ENCODE measurements at regions of chr14 and their contacts with region 1.

Region 1: GRCh38 chr14:76962303-76962660 is 66.2 kb downstream of the IRF2BPL start:
- DNase-seq: no peak
- ATAC-seq: no peak
- H3K4me3 Mint-ChIP-seq: peak overlapping the region; percentile 59
- H3K27ac Mint-ChIP-seq: peak overlapping the region; percentile 100
- H3K4me1 Mint-ChIP-seq: peaks cover 87% of the 10 kb centered on the region
- H3K27me3 Mint-ChIP-seq: no peaks in the 10 kb centered on the region
- CTCF ChIP-seq: no peak

Region 2: DNA sequence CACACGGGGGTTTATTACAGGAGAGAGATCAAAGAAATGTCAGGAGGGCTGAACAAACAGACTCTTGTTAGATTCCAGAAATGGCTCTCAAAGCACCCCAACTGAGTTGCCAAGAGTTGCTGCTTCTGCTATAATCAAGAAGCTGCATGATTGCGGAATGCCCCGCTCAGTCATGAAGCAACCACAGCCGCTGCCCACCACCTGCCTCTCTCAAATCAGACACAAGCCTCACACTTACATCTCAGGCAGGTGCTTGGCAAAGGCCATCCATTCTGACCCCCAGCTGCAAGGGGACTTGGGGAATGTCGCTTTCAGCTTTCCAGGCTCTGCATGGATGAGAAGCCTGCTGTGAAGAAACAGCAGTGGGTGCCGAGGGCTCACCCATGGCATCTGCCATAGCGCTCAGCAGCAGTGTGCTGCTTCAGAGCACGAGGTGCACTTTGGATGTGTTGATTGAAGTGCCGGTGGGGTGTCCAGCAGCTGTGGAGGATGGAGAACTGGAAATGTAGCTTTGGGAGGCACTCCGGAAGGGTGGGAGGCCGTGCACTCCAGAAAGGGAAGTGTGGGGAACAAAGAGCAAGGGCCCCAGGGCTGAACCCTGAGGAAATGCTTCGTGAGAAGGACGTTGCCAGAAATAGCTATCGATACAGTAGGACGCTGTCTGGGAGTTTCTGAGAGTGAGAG is 98.4 kb before region 1 on chr14:
- CTCF ChIA-PET with region 1: no interaction called
- POLR2A ChIA-PET with region 1: no interaction called
- DNase-seq: no peak
- ATAC-seq: peak; percentile 16
- H3K4me3 Mint-ChIP-seq: no peak overlapping the region
- H3K27ac Mint-ChIP-seq: no peak overlapping the region
- H3K4me1 Mint-ChIP-seq: peaks cover 41% of the 10 kb centered on the region
- H3K27me3 Mint-ChIP-seq: no peaks in the 10 kb centered on the region; the same call in none of the 2 replicates
- CTCF ChIP-seq: no peak

Region 3: DNA sequence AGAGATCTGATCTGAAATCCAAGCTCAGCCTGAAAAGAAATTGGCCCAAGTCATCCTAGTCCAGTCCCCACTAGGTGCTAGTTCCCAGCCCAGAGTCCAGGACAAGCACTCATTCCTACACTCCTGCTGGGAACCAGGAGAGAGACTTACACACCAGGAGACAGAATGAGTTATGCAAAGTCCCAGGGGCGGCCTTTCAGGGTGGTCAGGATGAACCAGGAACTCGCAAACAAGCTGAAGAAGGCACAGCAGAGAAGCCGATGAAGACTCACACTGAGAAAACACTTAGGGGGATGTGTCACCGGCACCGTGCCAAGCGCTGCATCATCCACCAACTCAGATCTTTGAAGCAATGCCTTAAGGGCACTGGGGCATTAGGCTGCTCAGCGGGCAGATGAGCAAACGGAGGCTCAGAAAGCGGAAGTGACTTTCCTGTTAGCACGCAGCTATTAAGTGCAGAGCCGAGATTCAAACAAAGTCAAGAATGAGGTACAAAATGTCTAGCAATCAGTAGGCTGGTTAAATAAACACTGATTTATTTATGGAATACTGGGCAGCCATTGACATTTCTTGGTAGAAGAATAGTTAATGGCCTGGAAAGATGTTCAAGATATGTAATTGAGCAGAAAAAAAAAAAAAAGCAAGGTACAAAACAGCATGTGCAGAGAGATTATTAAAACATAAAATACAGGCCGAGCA is 57.4 kb before region 1 on chr14:
- CTCF ChIA-PET with region 1: no interaction called
- POLR2A ChIA-PET with region 1: no interaction called
- DNase-seq: no peak
- ATAC-seq: peak; percentile 44
- H3K4me3 Mint-ChIP-seq: no peak overlapping the region
- H3K27ac Mint-ChIP-seq: 0 out of 2 replicates have a peak overlapping the region, but pooled peaks have one; percentile 20
- H3K4me1 Mint-ChIP-seq: peaks cover 8% of the 10 kb centered on the region
- H3K27me3 Mint-ChIP-seq: no peaks in the 10 kb centered on the region
- CTCF ChIP-seq: no peak

Region 4: DNA sequence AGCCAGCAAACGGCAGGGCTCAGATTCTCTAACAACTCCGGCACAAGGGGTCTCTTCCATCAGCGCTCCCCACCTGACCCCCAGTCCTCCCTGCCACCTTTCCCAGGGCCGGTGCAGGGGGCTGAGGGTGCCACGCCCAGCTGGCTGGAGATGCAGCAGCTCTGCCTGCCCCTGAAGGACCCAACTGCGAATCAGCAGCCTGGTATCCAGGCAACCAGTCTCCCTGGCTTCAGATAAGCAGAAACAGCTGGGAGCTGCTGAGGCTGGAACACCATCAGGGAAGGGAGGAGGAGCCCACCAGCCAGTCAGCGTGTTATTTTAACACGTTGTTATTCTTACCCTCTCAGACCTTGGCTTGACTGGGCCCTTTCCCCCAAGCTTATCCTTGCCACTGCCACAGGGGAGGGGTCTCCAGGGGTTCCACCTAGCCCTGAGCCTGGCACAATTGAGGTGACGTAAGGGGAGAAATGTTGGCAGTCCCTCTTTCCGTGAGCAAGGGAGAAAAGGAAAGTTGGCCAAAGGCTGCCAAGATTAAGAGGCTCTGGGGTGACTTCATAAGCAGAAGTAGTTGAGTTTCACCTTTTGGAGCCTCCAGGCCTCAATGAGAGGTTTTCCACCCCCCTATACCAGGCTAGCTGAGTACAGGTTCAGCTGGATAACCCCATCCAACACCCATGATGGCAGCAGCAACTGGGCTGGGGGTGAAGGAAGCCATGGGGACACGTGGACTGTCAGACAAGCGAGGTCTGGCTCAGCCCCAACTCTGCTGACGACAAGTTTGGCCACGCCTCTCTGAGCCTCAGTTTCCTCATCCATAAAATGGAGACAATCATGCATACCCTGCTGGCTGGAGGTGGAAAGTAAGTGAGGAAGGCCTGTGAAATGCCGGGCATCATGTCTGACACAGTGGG is 24.8 kb before region 1 on chr14:
- CTCF ChIA-PET with region 1: interaction called, 11 read pairs
- POLR2A ChIA-PET with region 1: interaction called, 5 read pairs
- DNase-seq: no peak
- ATAC-seq: peak; percentile 53
- H3K4me3 Mint-ChIP-seq: no peak overlapping the region
- H3K27ac Mint-ChIP-seq: peak overlapping the region; percentile 76; the same call in 1 of the 2 replicates
- H3K4me1 Mint-ChIP-seq: peaks cover 60% of the 10 kb centered on the region
- H3K27me3 Mint-ChIP-seq: no peaks in the 10 kb centered on the region
- CTCF ChIP-seq: no peak

Region 5: DNA sequence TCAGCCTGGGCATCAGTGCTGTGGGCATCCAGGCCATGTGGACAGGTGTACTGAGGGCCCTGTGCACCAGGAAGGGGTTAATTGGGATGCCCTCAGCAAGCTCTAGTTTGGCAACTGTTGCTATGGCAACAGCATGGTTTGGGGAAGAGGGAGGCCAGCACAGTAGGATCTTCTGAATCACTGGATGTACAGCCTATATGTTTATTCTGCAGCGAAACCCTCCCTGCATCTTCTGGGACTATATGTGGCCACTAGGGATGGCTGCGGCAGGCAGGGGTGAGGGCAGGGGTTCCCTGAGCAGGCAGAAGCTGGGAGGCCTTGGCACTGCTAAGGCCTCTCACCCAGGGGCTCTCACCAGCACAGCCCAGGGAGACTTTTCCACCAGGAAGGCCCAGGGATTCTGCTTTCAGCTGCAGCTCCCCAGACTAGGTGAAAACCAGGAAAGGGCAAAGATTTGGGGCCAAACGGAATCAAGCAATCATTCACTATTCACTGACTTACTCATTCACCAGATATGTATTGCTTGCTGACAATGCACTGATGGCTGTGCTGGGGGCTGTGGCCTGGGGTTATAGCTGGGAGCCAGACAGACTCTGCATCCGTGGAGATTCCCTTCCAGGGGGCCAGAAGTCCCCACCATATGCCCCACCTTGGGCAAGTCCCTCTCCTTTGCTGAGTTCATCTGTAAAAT is 23.4 kb after region 1 on chr14:
- CTCF ChIA-PET with region 1: interaction called, 10 read pairs
- POLR2A ChIA-PET with region 1: interaction called, 8 read pairs
- DNase-seq: no peak
- ATAC-seq: peak; percentile 23; the same call in 1 of the 2 replicates
- H3K4me3 Mint-ChIP-seq: no peak overlapping the region
- H3K27ac Mint-ChIP-seq: peak overlapping the region; percentile 57; the same call in 1 of the 2 replicates
- H3K4me1 Mint-ChIP-seq: peaks cover 43% of the 10 kb centered on the region
- H3K27me3 Mint-ChIP-seq: no peaks in the 10 kb centered on the region
- CTCF ChIP-seq: no peak

Region 6: DNA sequence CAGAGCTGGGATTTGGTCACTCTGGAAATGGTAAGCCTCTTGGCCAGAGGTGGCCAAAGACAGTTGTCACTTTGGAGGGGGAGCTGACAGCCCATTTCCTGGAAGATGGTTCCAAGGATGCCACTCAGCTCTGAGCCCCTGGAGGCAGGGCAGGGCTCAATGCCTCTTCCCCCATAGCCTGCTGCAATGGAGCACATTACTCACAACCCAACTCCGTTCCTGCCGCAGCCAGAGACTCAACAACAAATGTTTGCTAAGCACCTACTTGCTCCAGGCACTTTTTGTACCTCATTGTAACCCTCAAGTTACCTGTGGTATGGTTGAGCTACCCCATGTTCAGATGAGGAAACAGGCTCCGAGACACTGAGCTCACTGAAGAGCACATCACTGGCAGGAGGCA is 46.7 kb after region 1 on chr14:
- CTCF ChIA-PET with region 1: interaction called, 10 read pairs
- POLR2A ChIA-PET with region 1: interaction called, 5 read pairs
- DNase-seq: no peak
- ATAC-seq: no peak
- H3K4me3 Mint-ChIP-seq: no peak overlapping the region
- H3K27ac Mint-ChIP-seq: no peak overlapping the region
- H3K4me1 Mint-ChIP-seq: peaks cover 68% of the 10 kb centered on the region
- H3K27me3 Mint-ChIP-seq: no peaks in the 10 kb centered on the region
- CTCF ChIP-seq: no peak

Region 7: DNA sequence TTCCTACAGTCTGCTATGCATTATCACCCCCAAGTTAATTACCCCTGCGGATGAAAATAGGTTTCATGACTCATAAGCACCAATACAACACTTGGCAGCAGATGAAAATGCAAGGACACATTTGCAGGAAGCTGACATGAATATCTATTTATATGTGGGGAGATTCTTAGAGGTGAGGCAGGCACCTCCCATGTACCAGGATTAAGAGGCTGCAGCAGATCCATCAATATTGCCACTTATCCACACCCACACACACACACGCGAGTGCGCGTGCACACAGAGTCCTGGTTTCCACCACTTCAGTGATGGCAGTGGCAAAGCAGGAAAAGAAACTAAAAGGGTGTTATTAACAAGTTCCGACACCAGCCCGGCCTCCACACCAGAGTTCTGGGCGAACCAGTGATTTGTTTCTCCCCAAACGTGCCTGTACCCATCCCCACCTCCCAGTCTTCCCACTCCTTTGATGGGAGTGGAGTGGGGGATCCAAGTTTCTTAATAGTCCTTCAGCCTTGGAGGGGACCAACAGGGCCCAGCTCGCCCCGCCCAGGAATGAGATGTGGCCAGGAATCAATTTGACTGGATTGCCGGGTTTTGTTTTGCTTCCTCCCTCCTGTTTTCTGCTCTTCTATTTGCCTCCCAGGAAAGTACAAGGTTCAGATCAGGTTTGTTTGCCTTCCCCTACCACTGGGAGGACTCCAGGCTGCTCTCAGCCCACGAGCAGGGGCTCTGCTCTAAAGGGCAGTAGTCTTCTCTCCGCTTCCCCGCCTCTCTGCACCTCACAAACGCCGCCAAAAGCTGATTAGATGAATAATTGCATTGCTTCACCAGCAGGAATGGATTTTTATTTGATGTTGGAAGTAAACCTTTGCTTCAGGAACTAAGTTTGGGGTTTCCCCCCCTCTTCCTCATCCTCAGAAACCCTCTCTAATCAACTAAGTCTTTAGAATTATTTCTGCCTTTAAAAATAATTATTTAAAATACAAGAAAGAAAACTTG is 61.0 kb after region 1 on chr14:
- CTCF ChIA-PET with region 1: interaction called, 14 read pairs
- POLR2A ChIA-PET with region 1: interaction called, 45 read pairs
- DNase-seq: peak; percentile 44
- ATAC-seq: peak; percentile 40
- H3K4me3 Mint-ChIP-seq: peak overlapping the region; percentile 49
- H3K27ac Mint-ChIP-seq: peak overlapping the region; percentile 99
- H3K4me1 Mint-ChIP-seq: peaks cover 32% of the 10 kb centered on the region
- H3K27me3 Mint-ChIP-seq: peaks cover 2% of the 10 kb centered on the region; the same call in 1 of the 2 replicates
- CTCF ChIP-seq: no peak

Region 8: DNA sequence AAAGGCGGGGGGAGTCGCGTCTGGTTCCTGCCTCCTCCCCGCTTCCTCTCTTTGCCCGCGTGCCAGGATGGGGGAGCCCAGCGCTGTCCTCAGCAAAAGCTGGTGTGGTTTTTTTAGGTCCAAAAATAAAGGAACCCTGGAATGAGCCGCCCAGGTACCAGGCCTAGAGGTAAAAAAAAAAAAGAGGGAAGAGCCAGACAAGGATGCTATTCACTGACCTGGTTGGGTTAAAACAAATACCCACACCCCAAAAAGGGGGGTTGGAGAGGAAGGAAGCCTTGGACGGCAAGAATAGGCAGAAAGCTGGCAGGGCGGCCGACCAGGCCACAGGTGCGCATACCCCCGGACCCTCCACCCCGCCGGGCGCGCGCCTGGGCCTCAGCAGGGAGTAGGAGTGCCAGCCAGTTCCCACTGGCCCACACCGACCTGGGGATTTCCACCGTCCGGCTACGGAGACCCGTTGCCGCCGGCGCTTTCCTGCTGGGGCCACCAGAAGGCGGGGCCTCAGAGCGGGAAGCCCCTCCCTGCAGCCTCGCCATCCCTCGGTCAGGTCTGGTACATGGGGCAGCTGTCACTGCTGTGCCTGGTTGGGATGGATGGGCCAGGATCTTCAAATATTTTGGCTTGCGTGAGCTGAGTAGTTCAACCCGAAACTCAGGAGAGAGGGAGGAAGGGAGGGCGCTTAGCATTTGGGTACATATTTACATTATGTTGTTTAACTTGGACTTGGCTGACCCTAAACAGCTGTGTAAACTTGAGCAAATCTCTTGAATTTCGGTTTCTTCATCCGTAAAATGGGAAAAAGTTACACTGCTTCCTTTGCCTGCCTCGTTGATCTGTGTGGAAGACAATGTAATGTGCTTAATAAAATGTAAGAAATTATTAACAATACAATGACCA is 71.6 kb after region 1 on chr14:
- CTCF ChIA-PET with region 1: interaction called, 18 read pairs
- POLR2A ChIA-PET with region 1: interaction called, 32 read pairs
- DNase-seq: peak; percentile 95
- ATAC-seq: peak; percentile 70
- H3K4me3 Mint-ChIP-seq: peak overlapping the region; percentile 71
- H3K27ac Mint-ChIP-seq: peak overlapping the region; percentile 99
- H3K4me1 Mint-ChIP-seq: peaks cover 77% of the 10 kb centered on the region
- H3K27me3 Mint-ChIP-seq: peaks cover 5% of the 10 kb centered on the region
- CTCF ChIP-seq: no peak

Region 9: GRCh38 chr14:77067632-77068514 is 105.6 kb after region 1 on chr14:
- CTCF ChIA-PET with region 1: interaction called, 10 read pairs
- POLR2A ChIA-PET with region 1: no interaction called
- DNase-seq: peak; percentile 83
- ATAC-seq: peak; percentile 86
- H3K4me3 Mint-ChIP-seq: no peak overlapping the region
- H3K27ac Mint-ChIP-seq: no peak overlapping the region
- H3K4me1 Mint-ChIP-seq: peaks cover 27% of the 10 kb centered on the region
- H3K27me3 Mint-ChIP-seq: no peaks in the 10 kb centered on the region
- CTCF ChIP-seq: peak; percentile 74

Region 10: GRCh38 chr14:77105145-77105939 is 143.1 kb after region 1 on chr14:
- CTCF ChIA-PET with region 1: no interaction called
- POLR2A ChIA-PET with region 1: no interaction called
- DNase-seq: no peak
- ATAC-seq: peak; percentile 65
- H3K4me3 Mint-ChIP-seq: peak overlapping the region; percentile 47
- H3K27ac Mint-ChIP-seq: peak overlapping the region; percentile 88
- H3K4me1 Mint-ChIP-seq: peaks cover 70% of the 10 kb centered on the region
- H3K27me3 Mint-ChIP-seq: no peaks in the 10 kb centered on the region
- CTCF ChIP-seq: no peak